CD4-positive, alpha-beta memory T cell (primary cell): ENCODE measurements at regions of chr10 and their contacts with region 1.

Region 1: DNA sequence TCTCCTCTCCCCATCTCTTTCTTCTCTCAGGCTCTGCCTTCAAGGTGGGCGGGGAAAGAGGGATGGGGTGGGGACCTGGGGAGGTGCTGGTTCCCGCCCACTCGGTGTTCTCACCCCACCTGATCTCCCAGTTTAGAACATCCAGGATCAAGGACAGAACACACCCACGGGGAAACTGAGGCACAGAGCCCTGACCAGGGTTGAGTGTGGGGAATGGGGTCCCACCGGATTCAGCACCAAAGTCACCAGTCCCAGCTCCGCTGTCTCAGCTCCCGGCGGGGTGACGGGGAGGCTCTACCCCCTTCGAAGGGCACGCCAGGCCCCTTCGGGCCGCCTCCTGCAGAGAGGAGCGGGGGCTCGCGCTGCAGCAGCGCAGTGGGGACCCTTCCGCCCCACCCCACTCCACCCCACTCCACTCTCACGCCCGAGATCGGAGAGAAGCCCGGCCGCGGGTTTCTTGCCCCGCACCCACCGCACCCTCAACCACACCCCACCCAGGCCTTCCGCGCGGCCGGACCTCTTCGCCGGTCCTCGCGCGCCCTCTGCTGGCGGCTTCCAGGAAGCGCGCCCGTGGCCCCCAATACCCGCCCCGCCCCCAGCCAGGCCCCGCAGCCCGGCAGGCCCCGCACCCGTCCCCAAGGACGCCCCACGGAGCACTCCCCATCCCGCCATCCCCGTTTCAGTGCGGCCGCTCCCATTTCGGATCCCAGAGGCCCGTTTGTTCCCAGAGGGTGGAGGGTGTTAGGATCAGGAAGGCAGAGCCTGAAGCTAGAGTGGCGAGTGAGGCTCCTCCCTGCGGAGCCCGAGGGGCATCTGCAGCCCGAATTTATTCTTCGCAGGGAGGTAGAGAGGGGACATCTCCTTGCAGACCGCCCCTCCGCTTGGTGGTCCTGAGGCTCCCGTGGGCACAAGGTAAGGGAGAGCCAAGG is 18.0 kb downstream of the POLL start:
- DNase-seq: peak; percentile 74 to 83 (median 76)
- H3K4me3 ChIP-seq: peak overlapping the region; percentile 23 to 68
- H3K4me3 Mint-ChIP-seq: peak overlapping the region; percentile 38 to 76 (median 67)
- H3K27ac ChIP-seq: no peak overlapping the region
- H3K27ac Mint-ChIP-seq: peak overlapping the region in 2 of 7 donors; percentile 17 to 42
- H3K4me1 ChIP-seq: peaks cover 21% of the 10 kb centered on the region
- H3K4me1 Mint-ChIP-seq: peaks cover 6 to 28% (median 9%) of the 10 kb centered on the region in 4 donors
- H3K27me3 ChIP-seq: peaks cover 13% of the 10 kb centered on the region
- H3K27me3 Mint-ChIP-seq: peaks cover 25 to 42% of the 10 kb centered on the region in 2 donors

Region 2: GRCh38 chr10:101161494-101162299 is 408.4 kb before region 1 on chr10:
- CTCF ChIA-PET with region 1: interaction called, 5 read pairs
- POLR2A ChIA-PET with region 1: interaction called, 3 read pairs
- intact Hi-C with region 1: loop called (anchors 1 kb)
- DNase-seq: peak; percentile 62 to 71 (median 69)
- H3K4me3 ChIP-seq: no peak overlapping the region
- H3K4me3 Mint-ChIP-seq: peak overlapping the region in 3 of 8 donors; percentile 41 to 69 (median 62)
- H3K27ac ChIP-seq: no peak overlapping the region
- H3K27ac Mint-ChIP-seq: peak overlapping the region in 2 of 7 donors; percentile 14 to 20
- H3K4me1 ChIP-seq: peaks cover 8% of the 10 kb centered on the region
- H3K4me1 Mint-ChIP-seq: peaks cover 6 to 14% (median 11%) of the 10 kb centered on the region in 4 donors
- H3K27me3 ChIP-seq: peaks cover 7% of the 10 kb centered on the region
- H3K27me3 Mint-ChIP-seq: peaks cover 38 to 51% of the 10 kb centered on the region in 2 donors

Region 3: GRCh38 chr10:101272229-101272868 is 297.8 kb before region 1 on chr10:
- CTCF ChIA-PET with region 1: interaction called, 3 read pairs
- POLR2A ChIA-PET with region 1: no interaction called
- intact Hi-C with region 1: loop called (anchors 1 kb)
- DNase-seq: peak in 4 of 5 donors; percentile 38 to 50 (median 45)
- H3K4me3 ChIP-seq: no peak overlapping the region
- H3K4me3 Mint-ChIP-seq: no peak overlapping the region
- H3K27ac ChIP-seq: no peak overlapping the region
- H3K27ac Mint-ChIP-seq: no peak overlapping the region
- H3K4me1 ChIP-seq: no peaks in the 10 kb centered on the region
- H3K4me1 Mint-ChIP-seq: peaks cover 0 to 7% (median under 1%) of the 10 kb centered on the region in 4 donors
- H3K27me3 ChIP-seq: no peaks in the 10 kb centered on the region
- H3K27me3 Mint-ChIP-seq: peaks cover 16 to 26% of the 10 kb centered on the region in 2 donors

Region 4: DNA sequence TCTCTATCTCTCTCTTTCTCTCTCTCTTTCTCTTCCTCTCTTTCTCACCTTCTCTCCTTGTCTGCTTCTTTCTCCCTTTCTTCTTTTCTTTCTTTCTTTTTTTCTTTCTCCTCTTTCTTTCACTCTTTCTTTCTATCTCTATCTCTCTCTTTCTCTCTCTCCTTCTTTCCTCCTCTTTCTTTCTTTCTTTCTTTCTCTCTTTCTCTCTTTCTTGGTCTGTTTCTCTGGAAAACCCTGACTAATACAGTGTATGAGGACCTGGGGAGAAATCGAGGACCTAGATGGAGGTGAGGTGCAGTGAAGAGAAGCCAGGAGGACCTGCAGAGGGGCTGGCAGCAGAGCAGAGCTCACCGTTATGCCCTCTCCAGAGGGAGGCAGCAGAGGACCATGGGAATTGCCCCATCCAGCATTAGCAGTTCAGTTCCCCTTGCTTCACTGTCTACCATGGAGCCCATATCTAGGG is 268.8 kb before region 1 on chr10:
- CTCF ChIA-PET with region 1: interaction called, 3 read pairs
- POLR2A ChIA-PET with region 1: no interaction called
- intact Hi-C with region 1: loop called (anchors 5 kb)
- DNase-seq: no peak
- H3K4me3 ChIP-seq: no peak overlapping the region
- H3K4me3 Mint-ChIP-seq: no peak overlapping the region
- H3K27ac ChIP-seq: no peak overlapping the region
- H3K27ac Mint-ChIP-seq: no peak overlapping the region
- H3K4me1 ChIP-seq: no peaks in the 10 kb centered on the region
- H3K4me1 Mint-ChIP-seq: peaks cover 0 to 4% (median 1%) of the 10 kb centered on the region in 4 donors
- H3K27me3 ChIP-seq: peaks cover 4% of the 10 kb centered on the region
- H3K27me3 Mint-ChIP-seq: peaks cover 15 to 33% of the 10 kb centered on the region in 2 donors

Region 5: GRCh38 chr10:101536800-101537199 is 33.3 kb before region 1 on chr10:
- CTCF ChIA-PET with region 1: interaction called, 13 read pairs
- POLR2A ChIA-PET with region 1: no interaction called
- intact Hi-C with region 1: loop called (anchors 1 kb)
- DNase-seq: peak in 4 of 5 donors; percentile 19 to 24 (median 20)
- H3K4me3 ChIP-seq: no peak overlapping the region
- H3K4me3 Mint-ChIP-seq: no peak overlapping the region
- H3K27ac ChIP-seq: no peak overlapping the region
- H3K27ac Mint-ChIP-seq: no peak overlapping the region
- H3K4me1 ChIP-seq: no peaks in the 10 kb centered on the region
- H3K4me1 Mint-ChIP-seq: no peaks in the 10 kb centered on the region
- H3K27me3 ChIP-seq: no peaks in the 10 kb centered on the region
- H3K27me3 Mint-ChIP-seq: no peaks in the 10 kb centered on the region

Region 6: DNA sequence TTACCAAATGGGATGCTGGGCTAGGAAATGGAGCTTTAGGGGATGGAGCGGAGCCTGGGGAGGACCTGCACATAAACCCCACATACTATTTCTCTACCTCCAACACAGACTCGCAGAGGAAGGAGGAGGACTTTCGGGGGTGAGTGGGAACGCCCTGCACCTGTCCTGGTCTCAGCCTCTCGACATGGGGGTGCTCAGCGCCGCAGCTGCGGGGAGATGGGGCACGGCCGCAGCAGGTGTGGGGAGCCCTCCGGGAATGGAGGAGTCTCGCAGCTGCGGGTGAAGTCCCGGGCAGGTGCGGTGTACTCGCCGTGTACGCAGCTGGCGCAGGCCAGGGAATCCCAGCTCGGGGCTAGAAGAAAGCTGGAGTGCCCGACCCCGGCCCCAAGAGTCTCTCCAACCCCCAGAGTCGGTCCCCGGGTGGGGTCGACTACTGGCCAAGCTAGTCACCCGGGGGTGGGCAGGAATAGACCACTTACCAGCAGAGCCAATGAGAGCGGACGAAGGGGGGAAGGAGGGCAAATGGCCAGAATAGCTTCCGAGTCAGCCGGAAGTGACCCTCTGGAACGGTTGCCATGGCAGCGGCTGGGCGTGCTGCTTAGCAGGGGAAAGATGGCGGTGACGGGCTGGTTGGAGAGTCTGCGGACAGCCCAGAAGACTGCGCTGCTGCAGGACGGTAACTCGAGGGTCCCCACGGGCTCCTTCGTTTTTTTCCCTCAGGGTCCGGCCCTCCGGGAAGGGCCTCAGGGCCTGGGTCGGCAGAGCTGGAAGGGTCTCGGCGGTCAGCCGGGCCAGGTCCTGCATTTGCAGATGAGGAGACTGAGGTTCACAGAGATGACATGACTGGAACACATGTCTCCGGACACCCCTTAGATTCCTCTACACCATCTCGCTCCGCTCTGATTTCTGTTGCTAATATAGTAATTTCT is 17.9 kb after region 1 on chr10 and contains the starts of genes DPCD and POLL:
- CTCF ChIA-PET with region 1: interaction called, 20 read pairs
- POLR2A ChIA-PET with region 1: interaction called, 3 read pairs
- intact Hi-C with region 1: loop called (anchors 1 kb)
- DNase-seq: peak; percentile 83 to 86 (median 85)
- H3K4me3 ChIP-seq: peak within 1 kb of the TSS; percentile 79 to 81
- H3K4me3 Mint-ChIP-seq: peak within 1 kb of the TSS; percentile 94 to 97 (median 94)
- H3K27ac ChIP-seq: peak within 1 kb of the TSS; percentile 64
- H3K27ac Mint-ChIP-seq: peak within 1 kb of the TSS; percentile 82 to 93 (median 91)
- H3K4me1 ChIP-seq: peaks cover 17% of the 10 kb centered on the region
- H3K4me1 Mint-ChIP-seq: peaks cover 11 to 40% (median 26%) of the 10 kb centered on the region in 4 donors
- H3K27me3 ChIP-seq: no peaks in the 10 kb centered on the region
- H3K27me3 Mint-ChIP-seq: no peaks in the 10 kb centered on the region
- total RNA-seq, gene DPCD: 1.0 to 1.2 TPM
- total RNA-seq, gene POLL: 57.0 to 59.3 TPM